CD4-positive, alpha-beta T cell (primary cell): ENCODE measurements at regions of chr12 and their contacts with region 1.

Region 1: DNA sequence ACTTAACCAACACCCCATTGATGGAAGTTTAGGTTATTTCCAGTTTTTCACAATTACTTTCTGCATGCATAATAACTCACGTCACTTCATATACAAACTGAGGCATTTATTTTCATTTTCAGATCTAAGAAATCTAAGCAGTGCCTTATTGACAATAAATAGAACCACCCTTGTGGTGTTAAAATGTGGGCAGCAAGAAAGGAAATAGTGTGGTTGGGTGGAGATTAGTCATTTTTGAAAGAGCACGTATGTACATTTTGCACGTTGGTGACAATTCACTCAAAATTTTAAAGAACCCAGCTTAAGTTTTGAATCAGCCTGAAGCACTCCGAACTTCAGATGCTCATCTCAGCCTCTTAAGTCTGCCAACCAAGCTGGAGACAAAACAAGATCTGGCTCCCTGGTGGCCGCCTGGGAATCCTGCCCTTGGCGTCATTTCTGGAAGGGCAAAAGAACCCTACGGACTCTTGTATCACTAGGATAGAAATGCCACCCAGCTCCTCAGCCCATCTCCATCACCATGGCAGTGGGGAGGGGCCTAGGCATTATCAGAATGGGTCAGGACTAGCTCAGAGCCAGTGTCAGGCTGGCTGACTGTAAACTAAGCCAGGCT is 89.5 kb upstream of the BCL2L14 start:
- DNase-seq: peak in 13 of 14 experiments; percentile 9 to 93 (median 19)
- ATAC-seq: peak; percentile 84
- H3K4me3 ChIP-seq: peak overlapping the region; percentile 8
- H3K4me3 Mint-ChIP-seq: peak overlapping the region; percentile 1
- H3K27ac ChIP-seq: peak overlapping the region; percentile 54 to 77
- H3K27ac Mint-ChIP-seq: peak overlapping the region; percentile 67
- H3K4me1 ChIP-seq: peaks cover 32% of the 10 kb centered on the region
- H3K4me1 Mint-ChIP-seq: peaks cover 47% of the 10 kb centered on the region
- H3K27me3 ChIP-seq: no peaks in the 10 kb centered on the region
- H3K27me3 Mint-ChIP-seq: no peaks in the 10 kb centered on the region
- CTCF ChIP-seq: no peak

Region 2: DNA sequence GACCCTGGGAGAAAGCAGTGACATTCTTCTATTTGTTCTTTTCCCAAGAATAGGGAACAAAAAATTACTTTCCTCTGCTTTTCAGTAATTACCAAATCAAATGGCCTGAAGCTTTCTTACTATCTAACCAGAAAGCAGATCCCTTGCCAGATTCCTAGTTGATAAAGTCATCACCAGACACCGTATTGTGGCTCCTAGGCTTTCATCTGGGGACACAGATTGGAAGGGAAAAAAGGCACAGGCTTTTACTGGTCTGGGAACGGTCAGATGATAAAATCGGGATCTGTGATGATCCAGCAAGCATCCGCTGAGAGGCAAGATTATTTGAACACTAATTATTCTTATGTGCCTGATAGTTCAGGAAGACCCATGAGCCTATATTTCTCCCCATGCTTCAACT is 10.4 kb after region 1 on chr12:
- CTCF ChIA-PET with region 1: interaction called, 3 read pairs
- POLR2A ChIA-PET with region 1: interaction called, 12 read pairs
- intact Hi-C with region 1: no loop called
- DNase-seq: no peak
- ATAC-seq: no peak
- H3K4me3 ChIP-seq: no peak overlapping the region
- H3K4me3 Mint-ChIP-seq: no peak overlapping the region
- H3K27ac ChIP-seq: no peak overlapping the region
- H3K27ac Mint-ChIP-seq: no peak overlapping the region
- H3K4me1 ChIP-seq: no peaks in the 10 kb centered on the region
- H3K4me1 Mint-ChIP-seq: peaks cover 6% of the 10 kb centered on the region
- H3K27me3 ChIP-seq: no peaks in the 10 kb centered on the region
- H3K27me3 Mint-ChIP-seq: no peaks in the 10 kb centered on the region
- CTCF ChIP-seq: no peak

Region 3: DNA sequence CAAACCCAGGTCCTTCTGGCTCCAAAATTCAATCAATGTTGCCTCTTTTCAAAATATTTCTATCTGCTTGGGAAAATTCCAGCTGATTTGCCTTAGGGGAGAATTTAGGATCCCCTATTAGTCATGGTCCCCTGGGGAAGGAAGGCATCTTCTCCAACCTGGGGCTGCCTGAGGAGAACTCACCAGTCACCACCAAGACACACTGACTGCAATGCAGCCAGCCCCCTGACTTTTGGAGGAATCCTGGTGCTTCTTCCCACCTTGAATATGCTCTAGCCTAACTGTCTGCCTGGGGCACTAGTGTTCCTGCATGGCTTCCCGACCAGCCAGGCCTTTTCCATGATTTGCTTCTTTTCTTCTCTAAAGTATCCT is 17.7 kb after region 1 on chr12:
- CTCF ChIA-PET with region 1: interaction called, 5 read pairs
- POLR2A ChIA-PET with region 1: interaction called, 12 read pairs
- intact Hi-C with region 1: loop called in 1 of 2 experiments (anchors 1 kb)
- DNase-seq: peak in 1 of 14 experiments; percentile 25
- ATAC-seq: peak; percentile 4
- H3K4me3 ChIP-seq: no peak overlapping the region
- H3K4me3 Mint-ChIP-seq: peak overlapping the region; percentile 59
- H3K27ac ChIP-seq: peak overlapping the region; percentile 28 to 40
- H3K27ac Mint-ChIP-seq: peak overlapping the region; percentile 97
- H3K4me1 ChIP-seq: peaks cover 29% of the 10 kb centered on the region
- H3K4me1 Mint-ChIP-seq: peaks cover 52% of the 10 kb centered on the region
- H3K27me3 ChIP-seq: no peaks in the 10 kb centered on the region
- H3K27me3 Mint-ChIP-seq: no peaks in the 10 kb centered on the region
- CTCF ChIP-seq: no peak